Activated CD4-positive, alpha-beta T cell treated with anti-CD3 and anti-CD28 coated beads for 36 hours (primary cell): ENCODE measurements at regions of chr17 and their contacts with region 1.

Region 1: GRCh38 chr17:79991140-79991923 is 44.3 kb downstream of the TBC1D16 start:
- DNase-seq: peak; percentile 93
- ATAC-seq: peak; percentile 77
- H3K4me3 Mint-ChIP-seq: peak overlapping the region; percentile 75
- H3K27ac Mint-ChIP-seq: peak overlapping the region; percentile 14
- H3K4me1 Mint-ChIP-seq: peaks cover 41% of the 10 kb centered on the region
- H3K27me3 Mint-ChIP-seq: no peaks in the 10 kb centered on the region

Region 2: DNA sequence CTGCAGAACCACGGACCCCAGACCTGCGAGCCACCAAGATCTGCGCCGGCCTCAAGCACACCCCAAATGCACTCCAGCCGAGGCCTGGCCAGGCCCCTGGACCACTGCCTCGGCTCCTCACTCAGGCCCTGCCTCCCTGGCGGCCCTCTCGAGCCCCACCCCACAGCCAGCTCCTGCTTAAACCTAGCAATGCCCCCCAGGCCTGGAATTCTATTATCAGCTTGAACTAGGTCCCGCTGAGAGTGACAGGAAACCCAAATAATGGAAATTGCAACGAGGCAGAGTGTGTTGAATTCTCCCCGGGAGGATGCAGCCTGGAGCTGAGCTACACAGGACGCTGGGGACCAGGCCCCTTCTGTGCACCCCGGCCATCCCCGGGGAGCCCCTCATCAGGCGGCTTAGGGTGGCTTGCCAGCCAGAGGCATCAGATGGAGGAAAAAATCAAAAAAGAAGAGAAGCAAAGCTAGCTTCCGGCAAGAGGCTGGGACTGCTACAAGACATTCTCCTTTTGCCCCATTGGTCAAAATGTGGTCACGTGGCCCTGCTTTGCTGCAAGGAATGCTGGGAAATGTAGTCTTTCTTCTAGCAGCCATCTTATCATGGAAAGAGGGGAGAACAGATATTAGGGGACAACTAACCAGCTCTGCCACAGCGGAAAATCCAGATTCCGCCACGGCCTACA is 263.0 kb before region 1 on chr17:
- CTCF ChIA-PET with region 1: no interaction called
- POLR2A ChIA-PET with region 1: no interaction called
- intact Hi-C with region 1: loop called in 1 of 2 experiments (anchors 1 kb)
- DNase-seq: peak; percentile 91
- ATAC-seq: peak; percentile 90
- H3K4me3 Mint-ChIP-seq: peak overlapping the region; percentile 63
- H3K27ac Mint-ChIP-seq: peak overlapping the region; percentile 75
- H3K4me1 Mint-ChIP-seq: peaks cover 4% of the 10 kb centered on the region
- H3K27me3 Mint-ChIP-seq: no peaks in the 10 kb centered on the region

Region 3: GRCh38 chr17:79749156-79749815 is 242.0 kb before region 1 on chr17:
- CTCF ChIA-PET with region 1: interaction called, 8 read pairs
- POLR2A ChIA-PET with region 1: no interaction called
- intact Hi-C with region 1: loop called (anchors 1 to 5 kb)
- DNase-seq: no peak
- ATAC-seq: no peak
- H3K4me3 Mint-ChIP-seq: no peak overlapping the region
- H3K27ac Mint-ChIP-seq: no peak overlapping the region
- H3K4me1 Mint-ChIP-seq: peaks cover 25% of the 10 kb centered on the region
- H3K27me3 Mint-ChIP-seq: peaks cover 39% of the 10 kb centered on the region

Region 4: DNA sequence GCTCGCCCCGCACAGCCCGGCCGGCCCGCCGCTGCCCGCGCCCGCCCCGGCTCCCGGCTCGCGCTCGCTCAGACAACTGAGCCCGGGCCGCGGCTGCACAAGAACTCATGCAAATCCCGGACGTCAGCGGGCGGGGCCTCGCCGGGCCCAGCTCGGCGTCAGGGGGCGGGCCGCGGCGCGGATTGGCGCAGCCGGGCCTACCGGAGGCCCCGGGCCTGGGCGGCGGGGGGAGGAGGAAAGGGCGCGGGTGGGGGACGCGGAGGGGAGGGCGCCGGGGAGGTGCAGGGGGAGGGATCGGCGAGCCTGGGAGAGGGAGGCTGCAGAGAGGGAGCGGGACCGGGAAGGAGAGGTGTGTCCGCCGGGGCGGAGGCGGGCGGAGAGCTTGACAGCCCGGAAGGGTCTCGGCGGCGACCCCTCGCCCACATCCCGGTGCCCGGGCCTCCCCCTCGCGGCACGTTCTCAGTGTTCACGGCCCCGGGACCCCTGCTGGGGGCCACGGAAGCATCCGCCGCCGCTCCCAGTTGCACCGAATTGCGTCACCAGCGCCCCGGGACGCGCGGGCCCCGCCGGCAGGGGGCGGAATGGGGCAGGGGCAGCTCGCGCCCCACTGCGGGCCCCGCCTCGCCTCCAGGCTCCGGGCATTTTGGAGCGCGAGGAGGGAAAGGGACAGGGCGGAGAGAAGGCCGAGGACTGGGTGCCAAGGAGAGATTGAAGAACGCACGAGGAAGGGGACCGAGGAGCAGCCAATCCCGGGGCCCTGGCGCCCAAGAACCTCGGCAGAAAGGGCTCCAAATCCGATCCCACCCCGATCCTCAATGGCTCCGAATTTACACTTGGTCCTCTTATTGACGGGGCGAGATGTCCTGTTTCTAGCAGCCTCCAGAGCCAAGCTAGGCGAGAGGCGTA is 151.7 kb before region 1 on chr17 and contains the start of gene CBX4:
- CTCF ChIA-PET with region 1: interaction called, 4 read pairs
- POLR2A ChIA-PET with region 1: interaction called, 8 read pairs
- intact Hi-C with region 1: loop called (anchors 1 to 5 kb)
- DNase-seq: peak; percentile 96
- ATAC-seq: peak; percentile 80
- H3K4me3 Mint-ChIP-seq: peak within 1 kb of the TSS; percentile 92
- H3K27ac Mint-ChIP-seq: peak within 1 kb of the TSS; percentile 82
- H3K4me1 Mint-ChIP-seq: peaks cover 49% of the 10 kb centered on the region
- H3K27me3 Mint-ChIP-seq: peaks cover 29% of the 10 kb centered on the region
- total RNA-seq, gene CBX4: 14.9 to 18.5 TPM

Region 5: GRCh38 chr17:79933863-79934652 is 57.3 kb before region 1 on chr17:
- CTCF ChIA-PET with region 1: no interaction called
- POLR2A ChIA-PET with region 1: no interaction called
- intact Hi-C with region 1: loop called in 1 of 2 experiments (anchors 10 kb)
- DNase-seq: peak; percentile 38
- ATAC-seq: peak; percentile 55
- H3K4me3 Mint-ChIP-seq: no peak overlapping the region
- H3K27ac Mint-ChIP-seq: no peak overlapping the region
- H3K4me1 Mint-ChIP-seq: peaks cover 6% of the 10 kb centered on the region
- H3K27me3 Mint-ChIP-seq: peaks cover 25% of the 10 kb centered on the region

Region 6: GRCh38 chr17:80254396-80255251 is 263.3 kb after region 1 on chr17:
- CTCF ChIA-PET with region 1: no interaction called
- POLR2A ChIA-PET with region 1: no interaction called
- intact Hi-C with region 1: loop called (anchors 2 to 10 kb)
- DNase-seq: peak; percentile 83
- ATAC-seq: peak; percentile 62
- H3K4me3 Mint-ChIP-seq: peak overlapping the region; percentile 64
- H3K27ac Mint-ChIP-seq: peak overlapping the region; percentile 97
- H3K4me1 Mint-ChIP-seq: peaks cover 71% of the 10 kb centered on the region
- H3K27me3 Mint-ChIP-seq: no peaks in the 10 kb centered on the region